GM10248 (cell line): ENCODE measurements at regions of chr1 and their contacts with region 1.

Region 1: DNA sequence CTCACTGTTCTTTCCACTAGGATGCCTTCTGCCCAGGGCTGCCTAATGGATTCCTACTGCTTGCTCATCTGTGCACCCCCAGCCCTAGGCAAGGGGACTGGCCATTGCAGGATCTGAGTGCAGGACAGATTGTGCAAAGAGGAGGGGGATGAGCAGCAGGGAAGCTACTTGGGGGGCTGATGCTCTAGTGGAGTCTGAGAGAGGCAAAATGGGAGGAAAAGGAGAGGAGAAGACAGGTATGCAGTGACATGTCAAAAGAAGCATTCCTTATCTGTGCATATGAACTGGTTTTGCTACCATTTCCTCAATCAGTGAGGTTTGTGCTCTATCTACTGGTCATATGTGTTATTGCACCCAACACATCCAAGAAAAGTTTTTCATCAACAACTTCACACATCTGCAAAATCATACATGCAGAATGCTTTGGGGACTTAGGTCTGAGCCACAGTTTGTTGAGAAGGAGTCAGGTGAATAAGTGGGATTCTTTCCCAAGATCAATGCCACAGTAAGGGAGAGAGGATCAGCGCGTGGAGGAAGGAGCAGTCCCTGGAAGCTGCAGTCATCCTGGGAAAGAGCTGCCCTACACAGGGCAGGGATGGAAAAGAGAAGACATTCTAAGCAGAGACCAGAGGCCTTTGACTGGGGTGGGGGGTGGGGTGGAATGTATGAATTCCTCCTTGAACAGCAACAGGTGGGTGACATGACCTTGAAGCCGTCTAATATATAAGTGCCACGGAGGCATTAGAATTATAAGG is 14.4 kb downstream of the SLC5A9 start:
- DNase-seq: peak; percentile 53
- CTCF ChIP-seq: peak; percentile 48

Region 2: GRCh38 chr1:47325530-47325929 is 911.4 kb before region 1 on chr1:
- CTCF ChIA-PET with region 1: no interaction called
- POLR2A ChIA-PET with region 1: no interaction called
- DNase-seq: no peak
- CTCF ChIP-seq: no peak

Region 3: GRCh38 chr1:47997289-47998200 is 239.3 kb before region 1 on chr1 and contains the start of gene TRABD2B:
- CTCF ChIA-PET with region 1: interaction called, 12 read pairs
- POLR2A ChIA-PET with region 1: no interaction called
- DNase-seq: peak; percentile 89
- CTCF ChIP-seq: peak; percentile 97

Region 4: GRCh38 chr1:48291185-48291820 is 54.4 kb after region 1 on chr1:
- CTCF ChIA-PET with region 1: no interaction called
- POLR2A ChIA-PET with region 1: no interaction called
- DNase-seq: no peak
- CTCF ChIP-seq: no peak